ENCODE measurements at regions of chr1 and their contacts with region 1.

Region 1: DNA sequence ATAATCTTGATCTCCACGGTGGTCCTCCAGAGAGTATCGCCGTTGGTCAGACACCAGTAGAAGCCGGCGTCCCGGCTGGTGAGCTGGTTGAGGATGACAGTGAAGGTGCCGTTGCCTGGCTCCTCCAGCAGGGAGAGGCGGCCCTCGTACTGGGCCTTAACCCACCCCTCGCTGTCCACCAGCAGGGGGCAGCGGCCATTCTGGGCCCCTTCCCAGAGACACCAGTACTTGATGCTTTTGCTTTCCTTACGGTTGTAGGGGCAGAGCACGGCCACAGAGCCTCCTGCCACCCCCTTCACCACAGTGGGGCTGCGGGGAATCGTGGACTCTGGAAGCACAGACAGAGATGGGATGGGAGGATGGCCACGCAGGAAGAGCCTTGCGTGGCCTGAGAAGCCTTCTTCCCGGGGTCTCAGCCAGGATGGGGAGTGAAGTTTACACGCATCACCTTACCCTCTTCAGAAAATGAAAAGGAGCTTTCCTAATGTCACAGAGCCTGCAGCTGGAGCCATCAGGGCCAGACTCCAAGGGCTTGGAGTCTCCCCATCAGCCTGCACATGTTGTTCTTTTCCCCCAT is 10.7 kb downstream of the PIGR start:
- DNase-seq: peak; percentile 64
- ATAC-seq: peak; percentile 77
- H3K4me3 Mint-ChIP-seq: no peak overlapping the region
- H3K27ac Mint-ChIP-seq: no peak overlapping the region
- H3K4me1 Mint-ChIP-seq: peaks cover 34% of the 10 kb centered on the region
- H3K27me3 Mint-ChIP-seq: peaks cover 2% of the 10 kb centered on the region

Region 2: DNA sequence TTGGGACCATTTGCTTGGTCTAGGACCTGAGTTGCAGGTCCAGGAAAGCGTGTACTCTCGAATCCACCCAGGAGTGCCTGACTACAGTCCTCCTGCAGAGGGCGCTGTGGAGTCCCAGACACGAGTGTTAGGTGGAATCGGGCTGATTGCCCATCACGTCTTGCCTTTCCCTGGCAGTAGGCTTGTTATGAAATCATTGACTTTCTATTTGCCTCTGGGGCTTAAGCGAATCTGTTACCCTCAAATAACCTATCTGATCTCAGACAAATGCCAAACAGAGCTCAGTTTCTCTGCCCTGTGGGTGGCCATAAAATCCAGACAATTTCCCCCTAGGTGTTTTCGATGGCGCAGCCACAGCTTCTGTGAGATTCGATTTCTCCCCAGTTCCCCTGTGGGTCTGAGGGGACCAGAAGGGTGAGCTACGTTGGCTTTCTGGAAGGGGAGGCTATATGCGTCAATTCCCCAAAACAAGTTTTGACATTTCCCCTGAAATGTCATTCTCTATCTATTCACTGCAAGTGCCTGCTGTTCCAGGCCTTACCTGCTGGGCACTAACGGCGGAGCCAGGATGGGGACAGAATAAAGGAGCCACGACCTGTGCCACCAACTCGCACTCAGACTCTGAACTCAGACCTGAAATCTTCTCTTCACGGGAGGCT is 70.4 kb before region 1 on chr1 and contains the start of gene IL20:
- CTCF ChIA-PET with region 1: interaction called, 12 read pairs
- POLR2A ChIA-PET with region 1: no interaction called
- DNase-seq: peak; percentile 85
- ATAC-seq: peak; percentile 82
- H3K4me3 Mint-ChIP-seq: no peak within 1 kb of the TSS
- H3K27ac Mint-ChIP-seq: no peak within 1 kb of the TSS
- H3K4me1 Mint-ChIP-seq: peaks cover 6% of the 10 kb centered on the region
- H3K27me3 Mint-ChIP-seq: peaks cover 42% of the 10 kb centered on the region
- total RNA-seq, gene IL20: not detected

Region 3: GRCh38 chr1:206918076-206918475 is 17.5 kb before region 1 on chr1:
- CTCF ChIA-PET with region 1: interaction called, 89 read pairs
- POLR2A ChIA-PET with region 1: interaction called, 15 read pairs
- DNase-seq: no peak
- ATAC-seq: no peak
- H3K4me3 Mint-ChIP-seq: peak overlapping the region; percentile 58
- H3K27ac Mint-ChIP-seq: peak overlapping the region; percentile 75
- H3K4me1 Mint-ChIP-seq: peaks cover 66% of the 10 kb centered on the region
- H3K27me3 Mint-ChIP-seq: no peaks in the 10 kb centered on the region

Region 4: DNA sequence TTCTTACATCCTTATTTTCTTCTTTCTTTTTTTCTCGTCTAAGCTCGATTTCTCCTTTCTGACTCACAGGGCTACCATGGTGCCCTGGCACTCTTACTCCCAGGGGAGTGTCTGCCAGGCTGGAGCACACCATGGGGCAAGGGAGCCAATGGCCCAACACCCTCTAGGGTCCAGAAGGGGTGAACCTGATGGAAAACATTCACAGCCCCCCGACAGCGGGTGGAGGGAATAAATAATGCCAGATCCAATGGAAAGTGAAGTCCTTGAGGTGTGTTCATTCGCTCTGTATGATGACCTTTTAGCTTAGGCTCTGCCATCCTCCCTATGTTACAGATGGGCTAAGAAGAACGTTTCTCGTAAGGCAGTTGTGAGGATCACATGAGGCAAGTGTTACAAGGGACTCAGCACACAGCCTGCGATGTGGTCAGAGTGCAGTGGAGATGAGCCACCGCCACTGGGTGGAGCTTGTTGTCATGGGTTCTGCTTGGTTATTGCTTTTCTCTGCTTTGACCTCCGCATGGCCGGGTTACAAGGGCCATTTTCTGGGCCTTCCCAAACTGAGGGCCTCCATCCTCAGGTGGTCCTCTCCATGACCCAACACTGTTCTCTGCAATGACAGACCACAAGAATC is 10.4 kb before region 1 on chr1:
- CTCF ChIA-PET with region 1: interaction called, 94 read pairs
- POLR2A ChIA-PET with region 1: interaction called, 15 read pairs
- DNase-seq: peak; percentile 86
- ATAC-seq: peak; percentile 72
- H3K4me3 Mint-ChIP-seq: no peak overlapping the region
- H3K27ac Mint-ChIP-seq: no peak overlapping the region
- H3K4me1 Mint-ChIP-seq: peaks cover 29% of the 10 kb centered on the region
- H3K27me3 Mint-ChIP-seq: no peaks in the 10 kb centered on the region

Region 5: DNA sequence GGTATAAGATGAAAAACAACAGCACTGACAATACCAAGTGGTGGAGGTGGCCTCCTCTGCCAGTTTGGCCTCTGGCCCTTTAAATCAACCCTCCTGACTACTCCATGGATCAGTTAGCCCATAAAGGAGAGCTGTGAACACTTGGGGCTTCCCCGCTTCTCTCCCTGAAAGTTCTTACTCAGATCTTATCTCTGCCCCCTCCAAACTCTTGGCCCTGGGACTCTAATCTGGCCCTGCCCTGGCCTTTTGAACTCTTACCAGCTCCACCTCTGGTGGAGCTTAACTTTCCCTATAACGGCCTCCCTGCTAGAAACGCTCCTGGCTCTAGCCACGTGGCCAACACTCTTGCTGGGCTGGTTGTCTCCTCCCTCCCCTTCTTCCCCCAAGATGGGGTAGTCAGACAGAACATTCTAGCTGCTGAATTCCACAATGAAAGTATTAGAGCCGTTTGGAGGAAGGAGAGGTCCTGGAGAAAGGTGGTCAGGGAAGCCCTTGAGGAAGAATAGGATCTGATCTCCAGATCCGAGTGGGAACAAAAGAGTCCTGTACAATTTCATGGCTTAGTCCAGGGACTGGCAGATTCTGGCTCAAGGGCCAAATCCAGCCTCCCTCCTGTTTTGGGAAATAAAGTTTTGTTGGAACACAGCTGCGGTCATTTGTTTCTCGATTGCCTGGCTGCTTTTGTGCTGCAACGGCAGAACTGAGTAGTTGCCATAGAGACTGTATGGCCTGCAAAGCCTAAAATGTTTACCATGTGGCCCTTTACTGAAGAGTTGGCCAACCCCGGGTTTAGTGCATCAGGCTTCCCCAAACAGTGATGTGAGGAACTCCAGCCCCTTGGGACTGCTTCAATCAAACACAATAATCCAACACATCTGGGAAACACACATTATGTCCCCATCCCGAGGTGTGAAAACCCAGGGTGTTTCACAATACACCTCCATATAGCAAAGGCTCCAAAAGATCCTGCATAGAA is 20.2 kb after region 1 on chr1:
- CTCF ChIA-PET with region 1: interaction called, 17 read pairs
- POLR2A ChIA-PET with region 1: no interaction called
- DNase-seq: no peak
- ATAC-seq: no peak
- H3K4me3 Mint-ChIP-seq: no peak overlapping the region
- H3K27ac Mint-ChIP-seq: no peak overlapping the region
- H3K4me1 Mint-ChIP-seq: peaks cover 13% of the 10 kb centered on the region
- H3K27me3 Mint-ChIP-seq: no peaks in the 10 kb centered on the region

Region 6: GRCh38 chr1:206962272-206962671 is 26.7 kb after region 1 on chr1:
- CTCF ChIA-PET with region 1: interaction called, 17 read pairs
- POLR2A ChIA-PET with region 1: no interaction called
- DNase-seq: peak; percentile 28
- ATAC-seq: peak; percentile 79
- H3K4me3 Mint-ChIP-seq: no peak overlapping the region
- H3K27ac Mint-ChIP-seq: peak overlapping the region; percentile 40
- H3K4me1 Mint-ChIP-seq: peaks cover 45% of the 10 kb centered on the region
- H3K27me3 Mint-ChIP-seq: no peaks in the 10 kb centered on the region

Region 7: GRCh38 chr1:206967096-206967849 is 31.7 kb after region 1 on chr1:
- CTCF ChIA-PET with region 1: interaction called, 20 read pairs
- POLR2A ChIA-PET with region 1: no interaction called
- DNase-seq: no peak
- ATAC-seq: peak; percentile 57
- H3K4me3 Mint-ChIP-seq: peak overlapping the region; percentile 12
- H3K27ac Mint-ChIP-seq: peak overlapping the region; percentile 33
- H3K4me1 Mint-ChIP-seq: peaks cover 48% of the 10 kb centered on the region
- H3K27me3 Mint-ChIP-seq: peaks cover 26% of the 10 kb centered on the region

Region 8: DNA sequence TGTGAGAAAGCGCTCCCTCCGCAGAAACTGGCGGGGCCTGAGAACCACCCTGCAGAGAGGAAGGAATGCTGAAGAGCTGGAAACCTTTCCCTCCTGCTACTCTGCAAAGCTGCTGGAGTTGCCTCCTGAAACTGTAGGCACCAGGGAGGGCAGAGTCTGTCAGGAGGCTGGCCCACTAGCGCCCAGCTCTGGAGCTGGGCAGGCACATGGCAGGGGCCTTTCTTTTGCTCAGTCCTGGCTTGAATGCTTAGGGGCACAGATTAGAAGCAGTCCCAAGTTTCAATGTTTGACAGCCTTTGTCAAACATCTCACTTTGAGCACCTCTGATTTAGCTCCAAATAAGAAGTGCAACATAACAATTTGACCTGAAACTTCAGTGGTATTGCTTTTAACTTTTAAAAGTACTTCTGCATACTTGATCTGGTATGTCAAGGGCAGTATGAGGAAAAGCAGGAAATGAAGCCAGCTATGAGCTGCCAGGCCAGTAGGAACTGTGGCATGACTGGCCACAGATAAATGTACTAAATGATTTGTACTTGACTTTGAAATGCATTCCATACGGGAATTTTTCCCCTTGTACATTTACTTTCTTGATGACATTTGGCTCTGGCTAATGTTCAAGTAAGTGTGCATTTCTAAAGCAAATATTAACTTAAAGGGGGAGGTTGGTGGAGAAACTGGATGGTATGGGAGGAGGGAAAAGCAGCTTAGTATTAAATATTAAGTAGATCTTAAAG is 89.7 kb after region 1 on chr1:
- CTCF ChIA-PET with region 1: no interaction called
- POLR2A ChIA-PET with region 1: no interaction called
- DNase-seq: no peak
- ATAC-seq: no peak
- H3K4me3 Mint-ChIP-seq: no peak overlapping the region
- H3K27ac Mint-ChIP-seq: no peak overlapping the region
- H3K4me1 Mint-ChIP-seq: peaks cover 6% of the 10 kb centered on the region
- H3K27me3 Mint-ChIP-seq: peaks cover 35% of the 10 kb centered on the region

Region 9: DNA sequence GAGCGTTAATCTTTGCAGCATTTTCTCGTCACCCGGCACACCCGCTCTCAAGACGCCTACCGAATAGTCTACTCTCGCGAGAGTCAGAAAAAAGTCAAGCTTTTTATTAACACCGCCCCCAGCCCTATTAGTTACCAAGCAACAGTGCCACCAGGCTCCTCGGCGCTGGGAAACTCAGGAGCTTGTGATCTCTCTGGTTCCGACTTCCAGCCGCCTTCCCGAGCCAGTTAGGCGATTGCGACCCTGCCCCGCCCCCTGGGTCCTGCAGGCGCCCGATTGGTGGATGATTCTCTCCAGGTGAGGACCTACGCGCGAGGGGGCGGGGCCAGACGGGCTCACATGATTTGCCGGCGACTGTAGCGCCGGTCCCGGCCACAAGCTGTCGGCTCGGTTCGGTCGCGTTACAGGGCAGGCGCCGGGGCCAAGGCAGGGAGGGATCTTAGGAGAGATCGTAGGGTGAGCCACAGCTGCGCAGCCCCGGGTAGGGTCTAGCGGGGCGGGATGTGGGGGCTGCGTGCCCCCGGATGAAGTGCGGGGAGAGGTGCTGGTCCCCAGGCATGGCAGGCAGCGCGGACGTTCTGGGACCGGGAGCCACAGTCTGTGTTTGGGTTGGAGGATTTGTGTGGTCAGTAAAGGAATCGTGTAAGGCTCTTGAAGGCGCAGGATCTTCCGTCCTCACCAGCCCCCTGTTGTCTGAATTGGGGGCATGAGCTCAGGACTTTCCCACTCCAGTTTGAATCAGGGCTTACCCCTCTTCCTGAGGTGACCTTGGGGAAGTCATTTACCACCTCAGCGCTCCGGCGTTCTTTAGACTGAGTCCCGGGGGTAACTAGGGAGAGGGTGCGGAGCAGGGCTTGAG is 117.6 kb after region 1 on chr1 and contains the start of gene PFKFB2:
- CTCF ChIA-PET with region 1: no interaction called
- POLR2A ChIA-PET with region 1: no interaction called
- DNase-seq: peak; percentile 96
- ATAC-seq: peak; percentile 93
- H3K4me3 Mint-ChIP-seq: peak within 1 kb of the TSS; percentile 86
- H3K27ac Mint-ChIP-seq: peak within 1 kb of the TSS; percentile 92
- H3K4me1 Mint-ChIP-seq: peaks cover 46% of the 10 kb centered on the region
- H3K27me3 Mint-ChIP-seq: no peaks in the 10 kb centered on the region
- total RNA-seq, gene PFKFB2: 5.0 to 6.6 TPM

Region 10: GRCh38 chr1:207124389-207124788 is 188.8 kb after region 1 on chr1:
- CTCF ChIA-PET with region 1: no interaction called
- POLR2A ChIA-PET with region 1: no interaction called
- DNase-seq: no peak
- ATAC-seq: no peak
- H3K4me3 Mint-ChIP-seq: no peak overlapping the region
- H3K27ac Mint-ChIP-seq: no peak overlapping the region
- H3K4me1 Mint-ChIP-seq: no peaks in the 10 kb centered on the region
- H3K27me3 Mint-ChIP-seq: peaks cover 4% of the 10 kb centered on the region

Region 11: DNA sequence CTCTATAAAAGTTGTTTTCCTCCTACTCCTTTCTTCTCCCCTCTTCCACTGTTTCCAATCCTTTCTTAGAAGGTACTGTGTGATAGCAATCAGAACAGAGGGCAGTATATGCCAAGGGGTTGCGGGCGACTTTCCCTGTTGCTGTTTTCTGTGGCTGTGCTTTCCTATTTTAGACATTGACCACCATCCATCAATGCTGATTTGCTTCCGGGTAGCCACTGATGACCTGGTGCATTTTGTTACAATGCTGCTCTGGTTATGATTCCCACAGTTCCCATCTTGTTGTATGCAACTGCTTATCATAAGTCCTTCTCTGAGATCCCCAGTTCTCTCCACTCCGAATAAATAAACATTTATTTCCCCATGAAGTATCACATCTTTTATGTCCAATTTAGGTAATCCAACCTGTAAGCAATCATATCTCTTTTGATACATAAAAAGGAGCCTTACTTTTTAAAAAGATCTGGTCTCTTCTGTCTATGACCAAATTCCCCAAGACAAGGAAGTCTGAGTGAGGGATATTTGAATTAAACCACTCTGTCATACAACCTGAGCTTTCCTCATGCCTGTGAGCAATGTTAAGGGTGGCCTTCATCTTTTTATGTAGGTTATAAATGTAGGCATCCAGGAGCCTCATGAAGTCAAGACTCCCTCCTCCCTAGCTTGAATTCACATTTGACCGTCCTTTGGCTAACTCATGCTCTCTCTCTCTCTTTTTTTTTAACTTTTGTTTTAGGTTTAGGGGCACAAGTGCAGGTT is 333.4 kb after region 1 on chr1:
- CTCF ChIA-PET with region 1: no interaction called
- POLR2A ChIA-PET with region 1: no interaction called
- DNase-seq: no peak
- ATAC-seq: no peak
- H3K4me3 Mint-ChIP-seq: no peak overlapping the region
- H3K27ac Mint-ChIP-seq: no peak overlapping the region
- H3K4me1 Mint-ChIP-seq: no peaks in the 10 kb centered on the region
- H3K27me3 Mint-ChIP-seq: no peaks in the 10 kb centered on the region

Measured in activated CD8-positive, alpha-beta T cell treated with anti-CD3 and anti-CD28 coated beads, Interleukin-2, amount 10 ng/mL, durations not matched to agents 7 days and 5 days (primary cell).